Left colon (tissue), 2 donors: ENCODE measurements at regions of chr11 and their contacts with region 1.

Region 1: DNA sequence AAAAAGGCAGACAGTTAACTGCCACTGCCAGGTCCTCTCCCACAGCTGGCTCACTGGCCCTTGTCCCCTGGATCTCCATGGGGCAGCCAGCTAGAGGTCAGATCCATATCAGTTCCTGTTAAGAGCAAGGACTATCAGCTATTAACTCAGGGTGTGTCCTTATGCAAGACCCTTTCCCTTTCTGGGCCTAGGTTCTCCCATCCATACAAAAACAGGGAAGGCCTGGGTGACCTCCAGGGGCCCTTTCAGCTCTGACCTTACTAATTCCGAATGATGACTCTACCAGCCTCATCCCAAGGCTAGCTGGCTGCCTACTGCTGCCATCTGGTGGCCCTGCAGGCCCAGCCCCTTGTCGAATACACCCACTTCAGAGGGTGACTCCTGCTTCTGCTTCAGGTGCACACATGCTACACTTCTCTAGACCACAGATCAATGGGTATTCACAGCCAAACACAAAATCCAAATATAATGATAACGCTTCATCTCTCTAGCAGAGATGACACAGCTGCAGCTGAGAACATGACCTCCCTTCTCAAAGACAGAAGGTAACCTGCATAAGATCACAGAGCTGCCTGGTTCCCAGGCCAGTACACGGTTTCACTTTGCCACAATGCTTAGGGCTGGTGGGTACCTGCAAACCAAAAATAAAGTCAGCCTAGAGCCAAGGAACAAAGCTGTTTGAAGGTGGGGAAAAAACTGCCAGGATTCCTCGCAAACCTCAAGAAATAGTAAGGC is 34.1 kb downstream of the SERGEF start:
- DNase-seq: peak in 1 of 2 donors; percentile 57
- ATAC-seq: peak; percentile 94

Region 2: GRCh38 chr11:17598700-17599459 is 379.8 kb before region 1 on chr11:
- intact Hi-C with region 1: loop called (anchors 10 kb)
- DNase-seq: peak; percentile 40 to 80
- ATAC-seq: peak; percentile 83

Region 3: GRCh38 chr11:17730608-17731462 is 247.9 kb before region 1 on chr11:
- intact Hi-C with region 1: loop called (anchors 2 to 10 kb)
- DNase-seq: peak; percentile 44 to 73
- ATAC-seq: peak; percentile 90

Region 4: GRCh38 chr11:17747131-17747955 is 231.4 kb before region 1 on chr11:
- intact Hi-C with region 1: no loop called
- DNase-seq: no peak
- ATAC-seq: no peak

Region 5: GRCh38 chr11:17846852-17847453 is 131.8 kb before region 1 on chr11:
- intact Hi-C with region 1: no loop called
- DNase-seq: no peak
- ATAC-seq: no peak

Region 6: DNA sequence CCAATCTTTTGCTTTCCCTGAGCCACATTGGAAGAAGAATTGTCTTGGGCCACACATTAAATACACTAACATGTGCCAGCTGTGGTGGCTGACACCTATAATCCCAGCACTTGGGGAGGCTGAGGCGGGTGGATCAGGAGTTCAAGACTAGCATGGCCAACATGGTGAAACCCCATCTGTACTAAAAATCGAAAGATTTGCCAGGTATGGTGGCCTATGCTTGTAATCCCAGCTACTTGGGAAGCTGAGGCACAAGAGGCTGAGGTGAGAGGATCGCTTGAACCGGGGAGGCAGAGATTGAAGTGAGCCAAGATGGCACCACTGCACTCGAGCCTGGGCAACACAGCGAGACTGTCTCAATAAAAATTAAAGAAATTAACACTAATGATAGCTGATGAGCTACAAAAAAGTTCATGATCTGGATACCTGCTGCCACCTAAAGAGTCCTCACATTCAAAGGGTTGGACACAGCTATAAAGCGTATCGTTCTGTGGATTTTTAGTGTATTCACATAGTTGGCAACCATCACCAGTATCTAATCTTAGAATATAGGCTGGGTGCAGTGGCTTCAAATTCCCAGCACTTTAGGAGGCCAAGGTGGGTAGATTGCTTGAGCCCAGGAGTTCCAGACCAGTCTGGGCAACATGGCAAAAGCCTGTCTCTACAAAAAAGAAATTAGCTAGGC is 430.0 kb after region 1 on chr11:
- intact Hi-C with region 1: no loop called
- DNase-seq: no peak
- ATAC-seq: no peak

Region 7: GRCh38 chr11:18492888-18493287 is 514.2 kb after region 1 on chr11:
- intact Hi-C with region 1: no loop called
- DNase-seq: no peak
- ATAC-seq: no peak